Activated CD8-positive, alpha-beta T cell treated with anti-CD3 and anti-CD28 coated beads, Interleukin-2, amount 10 ng/mL, durations not matched to agents 7 days and 5 days (primary cell): ENCODE measurements at regions of chr11 and their contacts with region 1.

Region 1: GRCh38 chr11:119030329-119031049 is at the start of gene SLC37A4:
- DNase-seq: peak; percentile 99
- ATAC-seq: peak; percentile 95
- H3K4me3 Mint-ChIP-seq: peak within 1 kb of the TSS; percentile 65
- H3K27ac Mint-ChIP-seq: peak within 1 kb of the TSS; percentile 88
- H3K4me1 Mint-ChIP-seq: peaks cover 19% of the 10 kb centered on the region
- H3K27me3 Mint-ChIP-seq: no peaks in the 10 kb centered on the region
- total RNA-seq, gene SLC37A4: 22.4 to 26.6 TPM

Region 2: DNA sequence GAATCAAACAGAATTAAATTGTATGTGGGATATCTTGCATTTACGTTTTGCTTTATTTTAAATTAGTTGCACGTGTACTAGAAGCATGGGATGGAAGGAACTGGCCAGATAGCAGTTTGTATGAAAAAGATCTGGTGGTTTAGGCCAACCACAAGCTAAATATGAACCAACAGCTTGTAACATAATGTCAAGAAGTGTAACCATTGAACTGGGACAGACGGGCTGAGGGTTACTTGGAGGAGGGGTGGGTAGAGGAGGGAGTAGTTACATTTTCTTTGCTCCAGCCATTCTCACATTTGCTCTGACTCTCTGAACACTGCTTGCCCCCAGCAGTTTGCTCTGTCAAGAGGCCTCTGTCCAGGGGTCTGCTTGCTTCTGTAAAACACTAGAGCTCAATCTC is 178.5 kb before region 1 on chr11:
- CTCF ChIA-PET with region 1: no interaction called
- POLR2A ChIA-PET with region 1: no interaction called
- DNase-seq: no peak
- ATAC-seq: no peak
- H3K4me3 Mint-ChIP-seq: no peak overlapping the region
- H3K27ac Mint-ChIP-seq: peak overlapping the region; percentile 1
- H3K4me1 Mint-ChIP-seq: peaks cover 17% of the 10 kb centered on the region
- H3K27me3 Mint-ChIP-seq: peaks cover 4% of the 10 kb centered on the region

Region 3: GRCh38 chr11:118997627-118998387 is 32.7 kb before region 1 on chr11 and contains the start of gene CENATAC:
- CTCF ChIA-PET with region 1: interaction called, 5 read pairs
- POLR2A ChIA-PET with region 1: interaction called, 10 read pairs
- DNase-seq: peak; percentile 97
- ATAC-seq: peak; percentile 96
- H3K4me3 Mint-ChIP-seq: peak within 1 kb of the TSS; percentile 90
- H3K27ac Mint-ChIP-seq: peak within 1 kb of the TSS; percentile 92
- H3K4me1 Mint-ChIP-seq: peaks cover 39% of the 10 kb centered on the region
- H3K27me3 Mint-ChIP-seq: no peaks in the 10 kb centered on the region
- total RNA-seq, gene CENATAC: 39.3 to 41.1 TPM

Region 4: GRCh38 chr11:119018074-119018938 is 12.2 kb before region 1 on chr11 and contains the starts of genes RPS25 and TRAPPC4:
- CTCF ChIA-PET with region 1: interaction called, 12 read pairs
- POLR2A ChIA-PET with region 1: interaction called, 34 read pairs
- DNase-seq: peak; percentile 98
- ATAC-seq: peak; percentile 93
- H3K4me3 Mint-ChIP-seq: peak within 1 kb of the TSS; percentile 99
- H3K27ac Mint-ChIP-seq: peak within 1 kb of the TSS; percentile 100
- H3K4me1 Mint-ChIP-seq: peaks cover 48% of the 10 kb centered on the region
- H3K27me3 Mint-ChIP-seq: no peaks in the 10 kb centered on the region
- total RNA-seq, gene RPS25: 1,115 to 1,170 TPM
- total RNA-seq, gene TRAPPC4: 58.6 to 65.0 TPM

Region 5: DNA sequence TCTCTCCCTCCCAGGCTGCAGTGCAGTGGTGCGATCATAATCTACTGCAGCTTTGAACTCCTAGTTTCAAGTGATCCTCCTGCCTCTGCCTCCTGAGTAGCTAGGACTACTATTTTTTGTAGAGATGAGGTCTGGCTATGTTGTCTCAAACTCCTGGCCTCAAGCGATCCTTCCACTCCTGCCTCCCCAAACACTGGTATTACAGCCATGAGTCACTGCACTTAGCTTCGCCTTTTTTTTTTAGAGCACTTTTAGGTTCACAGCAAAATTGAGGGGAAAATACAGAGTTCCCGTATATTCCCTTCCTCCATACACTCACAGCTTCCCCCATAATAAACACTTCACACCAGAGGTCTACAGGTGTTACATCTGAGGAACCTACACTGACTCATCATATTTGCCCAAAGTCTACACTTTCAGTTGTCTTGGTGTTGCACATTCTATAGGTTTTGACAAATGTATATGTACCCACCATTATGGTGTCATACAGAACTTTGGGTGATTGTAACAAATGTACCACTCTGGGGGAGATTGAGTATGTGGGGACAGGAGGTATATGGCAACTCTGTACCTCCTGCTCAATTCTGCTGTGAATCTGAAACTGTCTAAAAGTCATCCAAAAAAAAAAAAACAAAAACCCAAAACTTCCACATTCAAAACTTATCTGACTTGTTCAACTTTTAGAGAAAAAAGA is 11.5 kb after region 1 on chr11:
- CTCF ChIA-PET with region 1: interaction called, 11 read pairs
- POLR2A ChIA-PET with region 1: no interaction called
- DNase-seq: no peak
- ATAC-seq: peak; percentile 54
- H3K4me3 Mint-ChIP-seq: no peak overlapping the region
- H3K27ac Mint-ChIP-seq: no peak overlapping the region
- H3K4me1 Mint-ChIP-seq: no peaks in the 10 kb centered on the region
- H3K27me3 Mint-ChIP-seq: peaks cover 5% of the 10 kb centered on the region

Region 6: DNA sequence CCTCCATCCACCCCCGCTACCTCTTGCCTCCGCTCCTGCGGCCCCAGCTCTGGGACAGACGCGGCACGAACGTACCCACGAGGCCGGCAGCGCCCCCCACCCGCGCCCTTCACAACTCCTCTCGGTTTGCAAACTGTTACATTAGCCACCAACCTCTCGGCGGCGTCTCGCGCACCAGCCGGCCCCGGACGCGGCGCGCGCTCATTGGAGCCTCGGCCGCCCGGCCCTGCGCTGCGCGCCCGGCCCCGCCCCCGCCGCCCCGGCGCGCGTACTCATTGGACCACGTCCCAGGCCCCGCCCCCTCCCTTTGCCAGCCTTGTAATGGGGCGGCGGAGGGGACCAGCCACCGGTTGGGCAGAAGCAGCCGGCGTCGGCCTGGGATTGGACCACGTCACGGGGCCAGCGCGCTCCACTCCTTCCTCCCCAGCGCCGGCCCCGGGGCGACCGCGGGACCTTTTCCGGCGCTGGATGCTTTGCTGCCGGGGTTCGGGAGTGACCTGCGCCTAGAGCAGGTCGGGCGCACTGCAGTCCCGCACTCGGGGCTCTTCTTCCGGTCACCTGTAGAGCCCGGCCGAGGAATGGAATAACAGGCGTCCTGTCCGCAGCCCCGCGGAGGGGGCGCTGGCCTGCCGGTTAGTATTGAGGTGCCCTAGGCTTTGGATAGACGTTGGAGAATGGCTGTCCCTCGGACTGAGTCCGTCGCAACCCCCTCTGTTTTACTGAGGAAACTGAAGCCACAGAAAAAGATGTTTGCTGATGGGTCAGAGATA is 26.7 kb after region 1 on chr11 and contains the start of gene HYOU1:
- CTCF ChIA-PET with region 1: interaction called, 12 read pairs
- POLR2A ChIA-PET with region 1: interaction called, 4 read pairs
- DNase-seq: peak; percentile 99
- ATAC-seq: peak; percentile 96
- H3K4me3 Mint-ChIP-seq: peak within 1 kb of the TSS; percentile 97
- H3K27ac Mint-ChIP-seq: peak within 1 kb of the TSS; percentile 99
- H3K4me1 Mint-ChIP-seq: peaks cover 30% of the 10 kb centered on the region
- H3K27me3 Mint-ChIP-seq: no peaks in the 10 kb centered on the region
- total RNA-seq, gene HYOU1: 133 to 135 TPM